ENCODE measurements at regions of chr3 and their contacts with region 1.

Region 1: GRCh38 chr3:185176750-185177359 is 24.0 kb upstream of the C3orf70 start:
- DNase-seq: no peak
- ATAC-seq: no peak
- H3K4me3 Mint-ChIP-seq: no peak overlapping the region
- H3K27ac Mint-ChIP-seq: no peak overlapping the region
- H3K4me1 Mint-ChIP-seq: peaks cover 12% of the 10 kb centered on the region
- H3K27me3 Mint-ChIP-seq: peaks cover 2% of the 10 kb centered on the region
- CTCF ChIP-seq: peak; percentile 89

Region 2: GRCh38 chr3:184561061-184561912 is 615.6 kb before region 1 on chr3 and contains the start of gene EPHB3:
- CTCF ChIA-PET with region 1: interaction called, 3 read pairs
- POLR2A ChIA-PET with region 1: no interaction called
- intact Hi-C with region 1: loop called (anchors 1 kb)
- DNase-seq: peak; percentile 89
- ATAC-seq: peak; percentile 93
- H3K4me3 Mint-ChIP-seq: peak within 1 kb of the TSS; percentile 77
- H3K27ac Mint-ChIP-seq: no peak within 1 kb of the TSS
- H3K4me1 Mint-ChIP-seq: peaks cover 15% of the 10 kb centered on the region
- H3K27me3 Mint-ChIP-seq: peaks cover 40% of the 10 kb centered on the region
- CTCF ChIP-seq: peak; percentile 67
- total RNA-seq, gene EPHB3: 0.05 and 0.07 TPM in 2 replicates

Region 3: GRCh38 chr3:184874709-184875644 is 301.9 kb before region 1 on chr3:
- CTCF ChIA-PET with region 1: interaction called, 13 read pairs
- POLR2A ChIA-PET with region 1: no interaction called
- intact Hi-C with region 1: loop called (anchors 1 kb)
- DNase-seq: no peak
- ATAC-seq: no peak
- H3K4me3 Mint-ChIP-seq: no peak overlapping the region
- H3K27ac Mint-ChIP-seq: no peak overlapping the region
- H3K4me1 Mint-ChIP-seq: no peaks in the 10 kb centered on the region
- H3K27me3 Mint-ChIP-seq: no peaks in the 10 kb centered on the region
- CTCF ChIP-seq: peak; percentile 28

Region 4: DNA sequence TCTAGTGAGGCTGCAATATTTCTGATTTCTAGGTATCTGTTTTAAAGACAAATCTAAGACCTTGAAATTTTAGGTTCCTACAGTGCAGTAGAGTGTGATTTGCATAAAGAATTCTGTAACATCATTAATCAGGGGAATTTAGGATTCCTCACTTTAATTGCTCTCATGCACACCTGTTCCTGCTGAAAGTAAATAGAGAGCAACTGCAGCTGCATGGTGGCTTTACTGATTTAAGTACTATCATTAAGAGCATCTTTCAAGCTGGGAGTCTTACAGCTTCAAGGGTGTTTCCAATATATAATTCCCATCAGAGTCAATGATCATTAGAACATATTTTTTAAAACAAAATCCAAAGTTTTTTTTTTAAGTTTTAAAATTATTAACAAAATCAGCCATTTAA is 12.0 kb after region 1 on chr3:
- CTCF ChIA-PET with region 1: interaction called, 4 read pairs
- POLR2A ChIA-PET with region 1: interaction called, 17 read pairs
- intact Hi-C with region 1: no loop called
- DNase-seq: no peak
- ATAC-seq: no peak
- H3K4me3 Mint-ChIP-seq: no peak overlapping the region
- H3K27ac Mint-ChIP-seq: no peak overlapping the region
- H3K4me1 Mint-ChIP-seq: no peaks in the 10 kb centered on the region
- H3K27me3 Mint-ChIP-seq: no peaks in the 10 kb centered on the region
- CTCF ChIP-seq: no peak

Region 5: DNA sequence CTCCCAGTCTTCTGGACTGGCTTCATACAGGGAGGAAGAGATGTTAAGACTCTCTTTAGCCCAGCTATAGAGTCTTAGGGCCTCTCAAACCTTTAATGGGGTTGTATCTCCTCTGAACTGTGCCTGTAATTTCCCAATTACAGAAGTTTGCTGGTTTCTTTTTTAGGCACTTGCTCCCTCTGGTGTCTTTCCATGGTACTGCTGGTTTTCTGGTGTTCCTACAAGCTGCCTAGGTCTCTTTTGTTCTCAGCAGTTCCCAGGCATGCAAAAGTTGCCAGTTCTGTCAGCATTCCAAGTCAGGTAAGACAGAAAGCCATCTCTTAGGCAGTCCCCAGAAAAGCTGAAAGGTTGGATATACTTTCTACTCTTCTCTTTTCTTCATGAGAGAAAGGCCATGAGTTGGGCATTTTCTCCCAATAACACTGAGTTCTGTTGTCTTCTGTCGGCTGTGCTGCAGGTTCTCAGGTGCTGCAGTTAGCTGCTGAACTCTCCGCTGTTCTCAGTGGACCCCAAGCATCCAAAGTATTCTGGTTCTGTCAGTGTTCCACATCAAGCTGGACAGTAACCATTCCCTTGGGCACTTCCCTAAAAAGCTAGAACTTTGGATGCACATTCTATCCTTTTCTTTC is 131.4 kb after region 1 on chr3:
- CTCF ChIA-PET with region 1: interaction called, 6 read pairs
- POLR2A ChIA-PET with region 1: no interaction called
- intact Hi-C with region 1: loop called (anchors 1 kb)
- DNase-seq: no peak
- ATAC-seq: peak; percentile 61
- H3K4me3 Mint-ChIP-seq: no peak overlapping the region
- H3K27ac Mint-ChIP-seq: no peak overlapping the region
- H3K4me1 Mint-ChIP-seq: no peaks in the 10 kb centered on the region
- H3K27me3 Mint-ChIP-seq: no peaks in the 10 kb centered on the region
- CTCF ChIP-seq: peak; percentile 28

Region 6: GRCh38 chr3:185605566-185605965 is 428.7 kb after region 1 on chr3:
- CTCF ChIA-PET with region 1: no interaction called
- POLR2A ChIA-PET with region 1: no interaction called
- intact Hi-C with region 1: no loop called
- DNase-seq: no peak
- ATAC-seq: no peak
- H3K4me3 Mint-ChIP-seq: no peak overlapping the region
- H3K27ac Mint-ChIP-seq: no peak overlapping the region
- H3K4me1 Mint-ChIP-seq: no peaks in the 10 kb centered on the region
- H3K27me3 Mint-ChIP-seq: no peaks in the 10 kb centered on the region
- CTCF ChIP-seq: no peak

Measured in activated B cell treated with CpG ODN at 0.5 μM for 24 hours (primary cell).